ENCODE measurements at regions of chr9 and their contacts with region 1.

Region 1: DNA sequence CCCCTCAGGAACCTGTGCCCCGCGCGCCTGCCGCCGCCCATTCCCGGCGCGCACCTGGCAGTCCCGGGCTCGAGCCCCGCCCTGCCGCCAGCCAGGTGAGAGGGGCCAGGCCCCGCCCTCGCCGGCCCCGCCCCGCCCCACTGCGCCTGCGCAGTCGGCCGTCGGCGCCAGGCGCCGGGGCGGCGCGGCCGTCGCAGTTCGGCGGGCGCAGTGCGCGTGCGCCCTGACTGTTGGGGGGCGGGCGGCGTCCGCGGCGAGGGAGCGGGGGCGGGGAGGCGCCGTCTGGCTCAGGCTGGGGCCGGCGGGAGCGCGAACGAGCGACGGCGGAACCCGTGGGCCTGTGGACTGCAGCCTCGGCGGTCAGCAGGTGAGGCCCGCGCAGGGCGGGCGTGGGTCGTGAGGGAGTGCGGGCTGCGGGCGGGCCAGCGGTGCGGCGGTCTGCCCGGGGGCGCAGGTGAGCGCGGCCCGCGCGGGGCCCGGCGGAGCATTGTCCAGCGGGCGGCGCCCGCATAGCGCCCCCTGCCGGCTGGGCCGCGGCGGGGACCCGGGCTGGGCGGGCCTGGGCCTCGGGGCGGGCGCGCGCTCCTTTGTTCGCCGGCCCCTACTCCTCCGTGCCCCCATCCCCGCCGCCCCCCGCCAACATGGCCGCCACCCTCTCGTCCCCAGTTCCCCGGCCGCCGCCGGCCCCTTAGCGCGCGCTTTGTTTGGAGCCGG is at the start of gene SPIN1:
- DNase-seq: peak; percentile 67 to 89 (median 84)
- H3K4me3 ChIP-seq: peak within 1 kb of the TSS; percentile 57 to 77
- H3K4me3 Mint-ChIP-seq: peak within 1 kb of the TSS; percentile 91 to 96 (median 94)
- H3K27ac ChIP-seq: peak within 1 kb of the TSS; percentile 65
- H3K27ac Mint-ChIP-seq: peak within 1 kb of the TSS; percentile 94 to 98 (median 96)
- H3K4me1 ChIP-seq: peaks cover 13% of the 10 kb centered on the region
- H3K4me1 Mint-ChIP-seq: peaks cover 11 to 46% (median 24%) of the 10 kb centered on the region in 4 donors
- H3K27me3 ChIP-seq: no peaks in the 10 kb centered on the region
- H3K27me3 Mint-ChIP-seq: no peaks in the 10 kb centered on the region
- total RNA-seq, gene SPIN1: 34.1 to 39.0 TPM

Region 2: DNA sequence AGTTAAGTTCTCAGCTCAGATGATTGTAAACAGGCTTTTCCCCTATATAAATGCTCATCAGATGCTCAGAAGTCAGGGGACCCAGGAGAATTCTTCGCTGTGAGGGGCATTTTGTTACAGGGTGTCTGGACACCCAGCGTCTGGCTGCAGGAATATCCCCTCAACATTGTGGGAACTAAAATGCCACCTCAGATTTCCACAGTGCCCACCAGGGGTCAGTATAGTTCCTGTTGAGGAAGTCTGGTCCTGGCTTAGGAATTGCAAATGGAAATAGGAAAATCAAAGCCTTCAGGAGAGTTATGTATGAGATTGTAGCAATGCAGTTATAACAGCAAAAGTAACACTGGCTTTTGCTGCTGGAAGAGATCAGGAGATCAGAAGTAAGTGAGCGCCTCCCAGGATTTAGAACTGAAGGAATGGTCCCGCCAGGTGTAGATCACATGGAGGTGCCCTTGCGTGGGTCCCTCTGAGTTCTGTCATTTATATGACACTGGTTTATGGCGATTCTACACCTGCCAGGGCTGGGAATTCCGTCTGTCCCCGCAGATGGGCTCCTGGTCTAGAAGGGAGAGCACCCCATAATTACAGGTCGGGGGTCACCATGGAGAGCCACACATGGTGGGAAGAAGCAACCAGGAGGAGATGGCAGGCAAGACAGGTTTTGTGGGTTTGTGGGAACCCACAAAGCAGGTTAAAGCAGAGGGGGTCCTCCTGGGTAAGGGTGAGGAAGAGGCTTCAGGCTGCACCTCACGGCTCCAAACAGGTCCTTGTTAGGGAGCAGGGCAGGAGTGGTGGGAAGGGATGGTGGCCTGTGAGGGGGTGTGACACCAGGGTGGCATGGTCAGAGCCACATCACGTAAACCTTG is 709.4 kb before region 1 on chr9:
- CTCF ChIA-PET with region 1: no interaction called
- POLR2A ChIA-PET with region 1: no interaction called
- intact Hi-C with region 1: loop called (anchors 2 kb)
- DNase-seq: peak in 4 of 5 donors; percentile 19 to 32 (median 28)
- H3K4me3 ChIP-seq: no peak overlapping the region
- H3K4me3 Mint-ChIP-seq: no peak overlapping the region
- H3K27ac ChIP-seq: no peak overlapping the region
- H3K27ac Mint-ChIP-seq: peak overlapping the region in 1 of 7 donors; percentile 32
- H3K4me1 ChIP-seq: no peaks in the 10 kb centered on the region
- H3K4me1 Mint-ChIP-seq: peaks cover 2 to 5% (median 5%) of the 10 kb centered on the region in 4 donors
- H3K27me3 ChIP-seq: no peaks in the 10 kb centered on the region
- H3K27me3 Mint-ChIP-seq: no peaks in the 10 kb centered on the region

Region 3: GRCh38 chr9:88173378-88173999 is 214.8 kb before region 1 on chr9:
- CTCF ChIA-PET with region 1: no interaction called
- POLR2A ChIA-PET with region 1: no interaction called
- intact Hi-C with region 1: loop called (anchors 1 kb)
- DNase-seq: peak in 4 of 5 donors; percentile 45 to 59 (median 47)
- H3K4me3 ChIP-seq: no peak overlapping the region
- H3K4me3 Mint-ChIP-seq: no peak overlapping the region
- H3K27ac ChIP-seq: no peak overlapping the region
- H3K27ac Mint-ChIP-seq: no peak overlapping the region
- H3K4me1 ChIP-seq: no peaks in the 10 kb centered on the region
- H3K4me1 Mint-ChIP-seq: peaks cover 0 to 4% (median 2%) of the 10 kb centered on the region in 4 donors
- H3K27me3 ChIP-seq: no peaks in the 10 kb centered on the region
- H3K27me3 Mint-ChIP-seq: peaks cover 5 to 6% of the 10 kb centered on the region in 2 donors

Region 4: DNA sequence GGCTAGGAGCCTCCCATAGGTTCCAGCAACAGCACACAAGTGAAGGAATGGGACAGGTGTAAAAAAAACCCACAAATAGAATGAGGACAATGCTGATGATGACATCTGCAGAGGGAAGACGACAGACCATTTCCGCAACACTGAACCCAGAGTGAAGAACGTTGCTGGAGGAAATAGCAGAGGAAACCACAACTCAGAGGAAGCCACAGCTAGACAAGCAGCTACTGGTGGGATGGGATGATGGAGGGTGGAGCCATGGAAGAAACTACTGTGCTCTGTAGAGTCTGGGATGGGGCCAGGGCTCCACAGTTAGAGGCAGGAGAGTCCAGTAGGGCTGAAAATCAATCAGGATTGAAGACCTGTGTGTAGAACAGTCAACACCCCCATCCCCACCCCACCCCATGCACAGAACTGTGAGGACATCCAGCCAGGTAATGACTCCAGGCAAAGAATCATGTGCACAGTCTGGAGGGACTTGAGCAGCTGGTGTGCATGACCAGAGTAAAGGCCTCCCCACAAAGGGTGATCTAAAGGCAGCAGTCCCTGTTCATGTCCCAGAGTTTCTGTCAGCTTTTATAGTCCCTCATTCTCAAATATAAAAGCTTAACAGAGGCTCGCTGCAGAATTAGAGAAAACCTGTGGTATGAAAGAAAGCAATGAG is 65.3 kb before region 1 on chr9:
- CTCF ChIA-PET with region 1: no interaction called
- POLR2A ChIA-PET with region 1: interaction called, 3 read pairs
- intact Hi-C with region 1: loop called (anchors 5 kb)
- DNase-seq: peak; percentile 73 to 82 (median 79)
- H3K4me3 ChIP-seq: peak overlapping the region in 1 of 2 donors; percentile 9
- H3K4me3 Mint-ChIP-seq: peak overlapping the region in 7 of 8 donors; percentile 58 to 89 (median 81)
- H3K27ac ChIP-seq: no peak overlapping the region
- H3K27ac Mint-ChIP-seq: peak overlapping the region; percentile 25 to 96 (median 83)
- H3K4me1 ChIP-seq: peaks cover 34% of the 10 kb centered on the region
- H3K4me1 Mint-ChIP-seq: peaks cover 23 to 39% (median 31%) of the 10 kb centered on the region in 4 donors
- H3K27me3 ChIP-seq: no peaks in the 10 kb centered on the region
- H3K27me3 Mint-ChIP-seq: no peaks in the 10 kb centered on the region

Region 5: GRCh38 chr9:88378317-88378716 is 10.0 kb before region 1 on chr9:
- CTCF ChIA-PET with region 1: no interaction called
- POLR2A ChIA-PET with region 1: no interaction called
- intact Hi-C with region 1: no loop called
- DNase-seq: no peak
- H3K4me3 ChIP-seq: no peak overlapping the region
- H3K4me3 Mint-ChIP-seq: no peak overlapping the region
- H3K27ac ChIP-seq: no peak overlapping the region
- H3K27ac Mint-ChIP-seq: no peak overlapping the region
- H3K4me1 ChIP-seq: no peaks in the 10 kb centered on the region
- H3K4me1 Mint-ChIP-seq: no peaks in the 10 kb centered on the region
- H3K27me3 ChIP-seq: no peaks in the 10 kb centered on the region
- H3K27me3 Mint-ChIP-seq: peaks cover 0 to 2% of the 10 kb centered on the region in 2 donors

Region 6: GRCh38 chr9:88559661-88560060 is 171.3 kb after region 1 on chr9:
- CTCF ChIA-PET with region 1: no interaction called
- POLR2A ChIA-PET with region 1: no interaction called
- intact Hi-C with region 1: no loop called
- DNase-seq: no peak
- H3K4me3 ChIP-seq: no peak overlapping the region
- H3K4me3 Mint-ChIP-seq: no peak overlapping the region
- H3K27ac ChIP-seq: no peak overlapping the region
- H3K27ac Mint-ChIP-seq: no peak overlapping the region
- H3K4me1 ChIP-seq: no peaks in the 10 kb centered on the region
- H3K4me1 Mint-ChIP-seq: no peaks in the 10 kb centered on the region
- H3K27me3 ChIP-seq: no peaks in the 10 kb centered on the region
- H3K27me3 Mint-ChIP-seq: peaks cover 8 to 9% of the 10 kb centered on the region in 2 donors

Region 7: GRCh38 chr9:89310475-89311346 is 922.4 kb after region 1 on chr9 and contains the start of gene CKS2:
- CTCF ChIA-PET with region 1: no interaction called
- POLR2A ChIA-PET with region 1: no interaction called
- intact Hi-C with region 1: loop called (anchors 5 kb)
- DNase-seq: peak; percentile 99 to 100 (median 100)
- H3K4me3 ChIP-seq: peak within 1 kb of the TSS; percentile 59 to 77
- H3K4me3 Mint-ChIP-seq: peak within 1 kb of the TSS; percentile 91 to 98 (median 96)
- H3K27ac ChIP-seq: peak within 1 kb of the TSS; percentile 96
- H3K27ac Mint-ChIP-seq: peak within 1 kb of the TSS; percentile 99 to 100 (median 99)
- H3K4me1 ChIP-seq: peaks cover 36% of the 10 kb centered on the region
- H3K4me1 Mint-ChIP-seq: peaks cover 16 to 40% (median 30%) of the 10 kb centered on the region in 4 donors
- H3K27me3 ChIP-seq: no peaks in the 10 kb centered on the region
- H3K27me3 Mint-ChIP-seq: peaks cover 1 to 2% of the 10 kb centered on the region in 2 donors
- total RNA-seq, gene CKS2: 6.5 to 8.5 TPM

Measured in CD4-positive, alpha-beta memory T cell (primary cell).